Sigmoid colon (tissue), 7 donors: ENCODE measurements at regions of chr10 and their contacts with region 1.

Region 1: GRCh38 chr10:103481974-103482531 is 3.0 kb upstream of the CALHM3 start:
- DNase-seq: no peak
- H3K4me3 ChIP-seq: no peak overlapping the region
- H3K27ac ChIP-seq: no peak overlapping the region
- H3K4me1 ChIP-seq: peaks cover 0 to 18% (median 18%) of the 10 kb centered on the region in 4 donors
- H3K27me3 ChIP-seq: peaks cover 0 to 4% (median 0%) of the 10 kb centered on the region in 3 donors
- CTCF ChIP-seq: peak in 3 of 4 experiments; percentile 31 to 64 (median 45)
- EP300 ChIP-seq: no peak
- POLR2A ChIP-seq: no peak

Region 2: GRCh38 chr10:103265717-103266329 is 216.2 kb before region 1 on chr10:
- intact Hi-C with region 1: no loop called
- DNase-seq: no peak
- H3K4me3 ChIP-seq: no peak overlapping the region
- H3K27ac ChIP-seq: no peak overlapping the region
- H3K4me1 ChIP-seq: no peaks in the 10 kb centered on the region
- H3K27me3 ChIP-seq: peaks cover 0 to 17% (median 3%) of the 10 kb centered on the region in 3 donors
- CTCF ChIP-seq: no peak
- EP300 ChIP-seq: no peak
- POLR2A ChIP-seq: no peak

Region 3: GRCh38 chr10:103416436-103417147 is 65.5 kb before region 1 on chr10:
- intact Hi-C with region 1: loop called (anchors 1 kb)
- DNase-seq: peak; percentile 78
- H3K4me3 ChIP-seq: no peak overlapping the region
- H3K27ac ChIP-seq: no peak overlapping the region
- H3K4me1 ChIP-seq: no peaks in the 10 kb centered on the region
- H3K27me3 ChIP-seq: no peaks in the 10 kb centered on the region
- CTCF ChIP-seq: peak in 3 of 4 experiments; percentile 21 to 56 (median 36)
- EP300 ChIP-seq: no peak
- POLR2A ChIP-seq: no peak

Region 4: DNA sequence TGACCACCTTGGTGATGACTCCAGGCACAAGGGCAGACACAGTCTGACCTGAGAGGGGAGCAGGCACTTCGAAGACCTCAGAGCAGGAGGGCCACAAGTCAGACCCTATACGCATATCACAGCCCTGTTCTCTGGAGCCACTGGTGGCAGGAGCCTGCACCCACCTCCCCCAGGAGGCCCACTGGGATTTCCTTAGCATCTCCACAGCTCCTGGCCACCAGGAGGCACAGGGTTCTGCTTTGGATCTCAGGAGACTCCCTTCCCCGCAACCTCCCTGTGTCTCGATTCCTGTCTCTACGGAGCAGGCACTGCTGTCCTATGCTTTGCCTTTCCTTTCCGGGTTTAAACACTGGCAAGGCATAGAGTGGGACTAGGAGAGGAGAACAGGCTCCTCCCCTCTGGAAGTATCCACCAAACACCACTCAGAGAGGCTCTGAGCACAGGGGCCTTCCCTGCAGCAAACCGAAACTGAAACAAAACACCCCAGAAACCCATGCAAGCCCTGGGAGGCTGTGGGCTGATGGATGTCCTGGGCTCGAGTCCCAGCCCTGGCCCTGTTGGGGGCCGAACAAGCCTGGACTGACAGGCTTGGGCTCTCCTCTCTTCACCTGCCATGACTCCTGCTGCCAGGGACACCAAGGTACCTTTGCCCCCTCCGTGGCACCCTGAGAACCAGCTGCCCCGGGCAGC is 177.8 kb after region 1 on chr10:
- intact Hi-C with region 1: loop called (anchors 10 kb)
- DNase-seq: peak; percentile 92
- H3K4me3 ChIP-seq: peak overlapping the region; percentile 46 to 81 (median 66)
- H3K27ac ChIP-seq: peak overlapping the region; percentile 96 to 98 (median 98)
- H3K4me1 ChIP-seq: peaks cover 0 to 61% (median 45%) of the 10 kb centered on the region in 4 donors
- H3K27me3 ChIP-seq: no peaks in the 10 kb centered on the region
- CTCF ChIP-seq: no peak
- EP300 ChIP-seq: no peak
- POLR2A ChIP-seq: peak in 1 of 2 donors; percentile 19